Panc1 (cell line): ENCODE measurements at regions of chr15 and their contacts with region 1.

Region 1: GRCh38 chr15:39000008-39000734 is 435.6 kb upstream of the RASGRP1 start:
- DNase-seq: no peak
- ATAC-seq: no peak
- H3K4me3 ChIP-seq: no peak overlapping the region
- H3K27ac ChIP-seq: no peak overlapping the region
- H3K4me1 ChIP-seq: no peaks in the 10 kb centered on the region
- H3K27me3 ChIP-seq: no peaks in the 10 kb centered on the region
- CTCF ChIP-seq: no peak

Region 2: DNA sequence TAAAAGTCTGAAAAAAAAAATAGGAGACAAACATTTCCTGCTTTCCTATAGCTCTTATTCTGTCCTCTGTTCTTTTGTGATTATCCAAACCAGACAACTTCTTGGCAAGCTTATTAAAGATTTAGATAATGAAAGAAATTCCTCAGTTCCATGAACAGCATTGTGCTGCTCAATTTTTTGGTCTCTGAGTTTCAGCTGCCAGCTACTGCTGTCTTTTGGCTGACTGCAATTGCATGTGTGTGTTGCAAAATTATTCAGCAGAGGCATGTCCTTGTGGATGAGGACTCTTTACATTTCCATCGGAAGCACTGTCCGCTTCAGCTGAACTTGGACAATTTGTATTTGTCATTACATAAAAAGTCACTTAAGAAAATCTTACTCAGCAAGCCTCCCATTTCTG is 38.2 kb before region 1 on chr15:
- CTCF ChIA-PET with region 1: no interaction called
- POLR2A ChIA-PET with region 1: no interaction called
- in situ Hi-C with region 1: no loop called
- intact Hi-C with region 1: no loop called
- DNase-seq: no peak
- ATAC-seq: no peak
- H3K4me3 ChIP-seq: no peak overlapping the region
- H3K27ac ChIP-seq: no peak overlapping the region
- H3K4me1 ChIP-seq: no peaks in the 10 kb centered on the region
- H3K27me3 ChIP-seq: no peaks in the 10 kb centered on the region
- CTCF ChIP-seq: no peak

Region 3: DNA sequence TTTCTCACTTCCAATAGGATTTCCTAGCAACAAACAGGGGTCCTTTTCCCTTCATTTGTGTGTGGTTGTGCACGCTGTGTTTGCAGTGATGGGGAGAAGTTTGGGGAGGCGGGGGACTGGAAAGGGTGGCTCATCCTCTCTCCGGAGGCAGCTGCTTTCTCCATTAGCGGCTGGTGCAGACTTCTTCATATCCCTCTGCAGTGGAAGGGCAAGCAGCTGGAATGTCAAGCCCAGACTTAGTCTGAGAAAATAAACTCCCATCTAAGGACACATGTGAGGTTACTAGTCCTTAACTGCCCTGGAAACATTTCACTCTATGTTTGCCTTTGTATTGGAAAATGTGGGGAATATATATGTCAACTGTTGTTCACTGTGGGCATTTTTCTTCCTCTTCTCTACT is 31.4 kb after region 1 on chr15:
- CTCF ChIA-PET with region 1: no interaction called
- POLR2A ChIA-PET with region 1: no interaction called
- in situ Hi-C with region 1: no loop called
- intact Hi-C with region 1: no loop called
- DNase-seq: no peak
- ATAC-seq: no peak
- H3K4me3 ChIP-seq: no peak overlapping the region
- H3K27ac ChIP-seq: no peak overlapping the region
- H3K4me1 ChIP-seq: no peaks in the 10 kb centered on the region
- H3K27me3 ChIP-seq: no peaks in the 10 kb centered on the region
- CTCF ChIP-seq: no peak

Region 4: GRCh38 chr15:39154227-39154638 is 154.1 kb after region 1 on chr15:
- CTCF ChIA-PET with region 1: no interaction called
- POLR2A ChIA-PET with region 1: no interaction called
- in situ Hi-C with region 1: no loop called
- intact Hi-C with region 1: loop called (anchors 10 kb)
- DNase-seq: no peak
- ATAC-seq: no peak
- H3K4me3 ChIP-seq: no peak overlapping the region
- H3K27ac ChIP-seq: no peak overlapping the region
- H3K4me1 ChIP-seq: no peaks in the 10 kb centered on the region
- H3K27me3 ChIP-seq: no peaks in the 10 kb centered on the region
- CTCF ChIP-seq: peak; percentile 22; the same call in 1 of the 2 replicates